GM12878 (cell line): ENCODE measurements at regions of chr17 and their contacts with region 1.

Region 1: GRCh38 chr17:32763855-32764439 is 113.0 kb downstream of the MYO1D start:
- DNase-seq: no peak
- ATAC-seq: peak; percentile 60
- H3K4me3 ChIP-seq: no peak overlapping the region
- H3K27ac ChIP-seq: no peak overlapping the region
- H3K4me1 ChIP-seq: no peaks in the 10 kb centered on the region
- H3K27me3 ChIP-seq: no peaks in the 10 kb centered on the region
- CTCF ChIP-seq: no peak
- EP300 ChIP-seq: 0 out of 4 replicates have a peak, but pooled peaks have one; percentile 5 to 36
- POLR2A ChIP-seq: no peak
- RAD21 ChIP-seq: no peak

Region 2: GRCh38 chr17:32470405-32471167 is 293.4 kb before region 1 on chr17:
- CTCF ChIA-PET with region 1: no interaction called
- POLR2A ChIA-PET with region 1: no interaction called
- RAD21 ChIA-PET with region 1: no interaction called
- SMC1A ChIA-PET with region 1: no interaction called
- in situ Hi-C with region 1: loop called (anchors 5 kb)
- intact Hi-C with region 1: no loop called
- DNase-seq: no peak
- ATAC-seq: no peak
- H3K4me3 ChIP-seq: no peak overlapping the region
- H3K27ac ChIP-seq: no peak overlapping the region
- H3K4me1 ChIP-seq: no peaks in the 10 kb centered on the region
- H3K27me3 ChIP-seq: no peaks in the 10 kb centered on the region
- CTCF ChIP-seq: no peak
- EP300 ChIP-seq: no peak
- POLR2A ChIP-seq: no peak
- RAD21 ChIP-seq: no peak